K562 (cell line): ENCODE measurements at regions of chr11 and their contacts with region 1.

Region 1: DNA sequence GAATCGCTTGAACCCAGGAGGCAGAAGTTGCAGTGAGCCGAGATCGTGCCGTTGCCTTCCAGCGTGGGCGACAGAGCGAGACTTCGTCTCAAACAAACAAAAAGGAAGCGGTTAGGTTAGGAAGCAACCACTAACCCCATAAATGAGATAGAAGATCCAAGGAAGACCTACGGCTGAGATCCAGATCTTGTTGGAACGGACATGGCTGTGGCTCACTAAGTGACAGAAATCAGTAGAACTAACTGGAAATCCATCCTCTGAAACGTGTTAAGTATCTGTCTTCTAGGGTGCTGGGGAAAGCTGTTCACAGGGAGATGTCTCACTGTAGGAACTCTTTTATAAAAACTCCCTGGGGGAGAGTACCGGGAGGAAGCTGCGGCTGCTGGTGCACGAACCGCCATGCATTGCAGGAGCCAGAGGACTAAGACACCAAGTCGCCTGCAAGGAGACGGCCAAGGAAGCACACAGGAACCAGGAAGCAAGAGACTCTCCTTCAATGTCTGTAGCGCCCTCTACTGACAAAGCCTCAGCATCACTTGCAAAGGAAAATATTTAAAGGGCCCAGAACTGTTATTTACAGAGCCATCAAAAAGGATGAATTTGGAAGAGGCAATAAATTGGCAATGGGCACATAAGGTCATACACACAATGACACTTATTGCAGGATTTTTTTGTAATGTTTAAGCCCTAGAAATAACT is 16.9 kb upstream of the SPTY2D1 start:
- DNase-seq: peak; percentile 60 to 87 (median 64)
- ATAC-seq: peak; percentile 95
- H3K4me3 ChIP-seq: no peak overlapping the region
- H3K27ac ChIP-seq: no peak overlapping the region
- H3K4me1 ChIP-seq: peaks cover 6 to 14% of the 10 kb centered on the region in 2 experiments
- H3K27me3 ChIP-seq: no peaks in the 10 kb centered on the region
- CTCF ChIP-seq: peak; percentile 75 to 92 (median 89)
- EP300 ChIP-seq: no peak
- POLR2A ChIP-seq: no peak
- RAD21 ChIP-seq: peak; percentile 83 to 89

Region 2: DNA sequence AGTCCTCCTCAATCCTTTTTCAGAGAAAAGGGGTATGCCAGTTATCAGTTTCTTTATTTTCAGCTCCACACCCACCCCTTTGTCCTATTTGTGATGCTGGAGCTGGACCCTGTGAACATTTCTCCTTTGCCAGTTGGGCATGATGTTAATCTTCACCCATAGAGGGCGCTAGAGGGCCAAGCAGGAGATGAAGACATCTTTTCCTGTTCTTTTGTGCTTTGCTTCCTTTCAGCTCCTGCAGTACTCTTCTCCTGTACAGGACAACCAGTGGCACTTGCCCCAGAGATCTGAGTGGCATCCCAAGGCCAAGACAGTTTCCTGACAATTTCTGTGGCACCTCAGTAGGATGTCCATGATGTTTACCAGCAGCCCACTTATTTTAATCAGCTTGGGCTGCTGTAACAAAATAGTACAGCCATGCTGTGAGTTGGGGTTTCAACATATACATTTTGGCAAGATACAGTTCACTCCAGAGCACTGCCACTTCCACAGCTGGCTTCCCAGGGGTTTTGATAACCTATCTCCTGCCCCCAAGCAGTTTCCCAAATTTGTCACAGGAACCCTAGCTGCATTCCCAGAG is 407.1 kb before region 1 on chr11:
- CTCF ChIA-PET with region 1: interaction called, 3 read pairs
- POLR2A ChIA-PET with region 1: interaction called, 3 read pairs
- in situ Hi-C with region 1: no loop called
- intact Hi-C with region 1: loop called (anchors 1 kb)
- DNase-seq: peak; percentile 61 to 80 (median 66)
- ATAC-seq: peak; percentile 82
- H3K4me3 ChIP-seq: no peak overlapping the region
- H3K27ac ChIP-seq: no peak overlapping the region
- H3K4me1 ChIP-seq: no peaks in the 10 kb centered on the region
- H3K27me3 ChIP-seq: peaks cover 5 to 8% of the 10 kb centered on the region in 2 experiments; a peak in 3 of 5 replicates
- CTCF ChIP-seq: peak; percentile 75 to 87 (median 79)
- EP300 ChIP-seq: no peak
- POLR2A ChIP-seq: no peak
- RAD21 ChIP-seq: peak; percentile 60 to 85

Region 3: GRCh38 chr11:18253231-18253630 is 397.8 kb before region 1 on chr11:
- CTCF ChIA-PET with region 1: no interaction called
- POLR2A ChIA-PET with region 1: no interaction called
- in situ Hi-C with region 1: loop called (anchors 10 kb)
- intact Hi-C with region 1: no loop called
- DNase-seq: no peak
- ATAC-seq: no peak
- H3K4me3 ChIP-seq: no peak overlapping the region
- H3K27ac ChIP-seq: no peak overlapping the region
- H3K4me1 ChIP-seq: no peaks in the 10 kb centered on the region
- H3K27me3 ChIP-seq: peaks cover 30 to 49% of the 10 kb centered on the region in 2 experiments
- CTCF ChIP-seq: no peak
- EP300 ChIP-seq: no peak
- POLR2A ChIP-seq: no peak
- RAD21 ChIP-seq: no peak

Region 4: GRCh38 chr11:18540207-18541009 is 110.6 kb before region 1 on chr11:
- CTCF ChIA-PET with region 1: interaction called, 9 read pairs
- POLR2A ChIA-PET with region 1: no interaction called
- in situ Hi-C with region 1: no loop called
- intact Hi-C with region 1: loop called (anchors 1 kb)
- DNase-seq: peak in 1 of 4 experiments; percentile 31
- ATAC-seq: peak; percentile 75; the same call in 2 of the 3 replicates
- H3K4me3 ChIP-seq: no peak overlapping the region
- H3K27ac ChIP-seq: no peak overlapping the region
- H3K4me1 ChIP-seq: no peaks in the 10 kb centered on the region
- H3K27me3 ChIP-seq: no peaks in the 10 kb centered on the region
- CTCF ChIP-seq: peak; percentile 24 to 70 (median 31); a peak in 3 of 6 replicates
- EP300 ChIP-seq: no peak
- POLR2A ChIP-seq: no peak
- RAD21 ChIP-seq: peak; percentile 69 to 79

Region 5: GRCh38 chr11:18578975-18579598 is 71.9 kb before region 1 on chr11:
- CTCF ChIA-PET with region 1: no interaction called
- POLR2A ChIA-PET with region 1: no interaction called
- in situ Hi-C with region 1: no loop called
- intact Hi-C with region 1: no loop called
- DNase-seq: peak in 2 of 4 experiments; percentile 20 to 34
- ATAC-seq: peak; percentile 65
- H3K4me3 ChIP-seq: no peak overlapping the region
- H3K27ac ChIP-seq: peak overlapping the region; percentile 37; the same call in 2 of the 3 replicates
- H3K4me1 ChIP-seq: peaks cover 0 to 6% of the 10 kb centered on the region in 2 experiments; a peak in 4 of 5 replicates
- H3K27me3 ChIP-seq: no peaks in the 10 kb centered on the region
- CTCF ChIP-seq: no peak
- EP300 ChIP-seq: peak; percentile 65
- POLR2A ChIP-seq: no peak
- RAD21 ChIP-seq: no peak